ENCODE measurements at regions of chr9 and their contacts with region 1.

Region 1: DNA sequence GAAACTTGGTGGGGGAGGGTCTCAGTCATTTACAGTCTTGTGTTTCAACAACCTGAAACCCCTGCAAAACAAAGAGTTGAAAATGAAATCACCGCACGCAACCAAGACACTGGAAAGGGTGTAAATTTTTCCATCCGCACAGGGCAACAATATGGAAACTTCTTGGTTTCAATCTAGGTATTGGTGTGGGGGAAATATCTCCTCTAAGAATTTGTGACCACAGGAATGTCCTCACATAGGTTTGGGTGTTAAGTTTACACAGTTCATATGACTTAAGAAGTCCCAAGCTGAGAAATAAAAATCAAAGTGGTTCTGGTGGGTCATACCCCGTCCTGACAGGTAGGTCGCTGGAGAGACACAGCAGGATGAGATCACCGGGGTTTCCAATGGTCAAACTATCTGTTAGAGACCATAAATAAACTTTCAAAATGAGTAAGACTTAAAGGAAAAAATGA is 51.9 kb upstream of the PIP5K1B start:
- DNase-seq: peak; percentile 77
- H3K4me3 Mint-ChIP-seq: peak overlapping the region; percentile 72
- H3K27ac Mint-ChIP-seq: peak overlapping the region; percentile 93
- H3K4me1 Mint-ChIP-seq: peaks cover 47% of the 10 kb centered on the region
- H3K27me3 Mint-ChIP-seq: peaks cover 2% of the 10 kb centered on the region

Region 2: GRCh38 chr9:68577774-68578591 is 75.2 kb before region 1 on chr9:
- intact Hi-C with region 1: no loop called
- DNase-seq: no peak
- H3K4me3 Mint-ChIP-seq: no peak overlapping the region
- H3K27ac Mint-ChIP-seq: no peak overlapping the region
- H3K4me1 Mint-ChIP-seq: no peaks in the 10 kb centered on the region
- H3K27me3 Mint-ChIP-seq: peaks cover 16% of the 10 kb centered on the region

Region 3: DNA sequence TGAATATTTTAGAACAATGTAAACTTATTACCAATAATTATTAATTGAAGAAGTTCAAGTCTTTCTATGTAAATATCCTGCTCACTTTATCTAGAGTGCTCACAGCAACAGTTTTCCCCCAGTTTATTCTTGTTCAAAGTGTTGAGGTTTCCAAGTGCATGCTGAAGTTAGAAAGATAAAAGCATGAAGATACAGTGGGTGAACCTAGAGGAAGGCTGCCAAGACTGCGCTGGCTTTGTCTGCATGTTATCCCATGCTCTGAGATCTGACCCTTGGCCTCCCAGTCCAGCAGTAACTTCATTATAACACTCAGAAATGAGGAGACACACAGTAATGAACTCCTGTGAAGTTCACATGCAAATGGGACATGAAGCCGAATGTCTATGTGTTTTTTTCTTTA is 24.1 kb before region 1 on chr9:
- intact Hi-C with region 1: no loop called
- DNase-seq: no peak
- H3K4me3 Mint-ChIP-seq: no peak overlapping the region
- H3K27ac Mint-ChIP-seq: no peak overlapping the region
- H3K4me1 Mint-ChIP-seq: no peaks in the 10 kb centered on the region
- H3K27me3 Mint-ChIP-seq: no peaks in the 10 kb centered on the region

Region 4: DNA sequence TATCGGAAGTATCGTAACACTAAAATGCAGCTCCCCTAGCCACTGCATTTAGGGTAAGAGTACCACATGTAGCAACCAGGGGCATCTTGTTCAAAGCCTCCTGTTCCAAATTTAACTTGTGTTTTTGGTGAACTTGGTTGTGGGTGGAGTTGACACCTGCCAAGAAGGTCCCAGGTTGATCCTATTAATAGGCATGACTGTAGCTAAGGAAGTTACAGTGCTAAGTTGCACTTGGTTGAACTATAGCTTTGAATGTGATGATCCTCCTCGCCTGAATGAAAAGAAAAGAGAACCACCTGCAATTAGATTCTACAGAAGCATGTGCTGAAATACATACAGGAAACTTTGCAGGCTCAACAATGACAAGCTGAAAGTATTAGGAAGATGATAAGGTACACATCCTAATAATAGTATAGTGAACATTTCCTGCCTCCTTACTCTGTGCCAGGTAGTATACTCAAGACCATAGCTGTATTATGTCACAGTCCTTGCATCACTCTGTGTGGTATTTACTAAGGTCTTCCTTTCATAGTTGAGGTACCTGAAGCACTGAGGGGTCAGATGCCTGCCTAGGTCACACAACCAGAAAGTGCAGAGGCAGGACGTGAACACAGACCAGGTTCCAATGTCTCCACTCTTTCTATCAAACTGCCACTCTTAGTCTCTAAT is 12.6 kb before region 1 on chr9:
- intact Hi-C with region 1: loop called (anchors 1 kb)
- DNase-seq: no peak
- H3K4me3 Mint-ChIP-seq: no peak overlapping the region
- H3K27ac Mint-ChIP-seq: peak overlapping the region; percentile 82
- H3K4me1 Mint-ChIP-seq: peaks cover 14% of the 10 kb centered on the region
- H3K27me3 Mint-ChIP-seq: no peaks in the 10 kb centered on the region

Region 5: GRCh38 chr9:68704814-68705530 is 51.8 kb after region 1 on chr9 and contains the start of gene PIP5K1B:
- intact Hi-C with region 1: loop called (anchors 1 kb)
- DNase-seq: peak; percentile 89
- H3K4me3 Mint-ChIP-seq: peak within 1 kb of the TSS; percentile 94
- H3K27ac Mint-ChIP-seq: peak within 1 kb of the TSS; percentile 93
- H3K4me1 Mint-ChIP-seq: peaks cover 31% of the 10 kb centered on the region
- H3K27me3 Mint-ChIP-seq: peaks cover 57% of the 10 kb centered on the region
- total RNA-seq, gene PIP5K1B: 56.6 and 58.8 TPM in 2 replicates

Region 6: GRCh38 chr9:68949271-68950000 is 296.3 kb after region 1 on chr9:
- intact Hi-C with region 1: loop called (anchors 1 kb)
- DNase-seq: peak; percentile 79
- H3K4me3 Mint-ChIP-seq: peak overlapping the region; percentile 28
- H3K27ac Mint-ChIP-seq: peak overlapping the region; percentile 81
- H3K4me1 Mint-ChIP-seq: peaks cover 59% of the 10 kb centered on the region
- H3K27me3 Mint-ChIP-seq: no peaks in the 10 kb centered on the region

Region 7: DNA sequence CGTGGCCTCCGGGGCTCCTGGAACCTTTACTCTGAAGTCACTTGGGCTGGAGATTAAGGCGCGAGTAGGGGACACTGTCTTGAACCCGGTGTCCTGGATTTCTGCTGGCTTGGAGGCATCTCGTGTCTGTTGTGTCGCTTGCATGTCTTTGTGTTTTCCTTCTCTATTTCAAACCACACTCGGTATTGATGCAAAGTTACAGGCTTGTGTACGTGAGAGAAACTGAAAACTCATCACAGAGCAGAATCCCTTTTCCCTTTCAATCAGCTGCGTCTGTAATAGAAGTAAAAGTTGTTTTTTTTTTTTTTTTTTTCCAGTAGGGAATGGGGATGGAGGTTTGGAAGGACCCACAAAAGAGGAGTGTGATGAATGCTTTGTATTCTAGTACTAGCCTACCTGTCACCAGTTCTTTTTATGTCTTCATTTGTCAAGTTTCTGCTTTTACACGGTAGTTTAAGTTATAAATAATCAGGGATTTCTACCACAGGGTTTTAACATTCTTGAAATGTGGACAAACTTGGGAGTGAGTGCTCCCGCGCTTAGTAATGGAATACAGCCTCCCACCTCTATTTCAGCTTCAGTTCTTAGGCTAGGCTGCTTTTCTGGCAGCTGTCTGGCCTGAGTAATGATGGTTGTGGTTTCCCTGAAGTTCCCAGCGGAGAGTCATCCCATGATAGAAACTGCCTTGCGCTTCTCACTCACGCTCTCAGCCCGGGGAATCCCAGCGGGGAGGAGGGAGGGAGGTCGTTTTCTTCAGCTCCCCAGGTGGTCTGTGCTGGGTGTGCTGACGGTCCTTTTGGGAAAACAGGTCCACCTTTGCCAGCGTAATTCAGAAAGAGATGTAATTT is 521.7 kb after region 1 on chr9:
- intact Hi-C with region 1: loop called (anchors 2 kb)
- DNase-seq: peak; percentile 80
- H3K4me3 Mint-ChIP-seq: peak overlapping the region; percentile 84
- H3K27ac Mint-ChIP-seq: peak overlapping the region; percentile 78
- H3K4me1 Mint-ChIP-seq: peaks cover 61% of the 10 kb centered on the region
- H3K27me3 Mint-ChIP-seq: peaks cover 24% of the 10 kb centered on the region